ENCODE measurements at regions of chr6 and their contacts with region 1.

Region 1: GRCh38 chr6:104682722-104683643 is 176.7 kb downstream of the HACE1 start:
- DNase-seq: peak; percentile 52 to 83
- ATAC-seq: peak; percentile 57 to 78 (median 60)
- H3K4me3 ChIP-seq: no peak overlapping the region
- H3K4me3 Mint-ChIP-seq: no peak overlapping the region
- H3K27ac ChIP-seq: no peak overlapping the region
- H3K27ac Mint-ChIP-seq: no peak overlapping the region
- H3K4me1 ChIP-seq: peaks cover 4% of the 10 kb centered on the region
- H3K4me1 Mint-ChIP-seq: peaks cover 6 to 12% of the 10 kb centered on the region in 2 donors
- H3K27me3 ChIP-seq: no peaks in the 10 kb centered on the region
- H3K27me3 Mint-ChIP-seq: no peaks in the 10 kb centered on the region
- CTCF ChIP-seq: peak; percentile 87

Region 2: DNA sequence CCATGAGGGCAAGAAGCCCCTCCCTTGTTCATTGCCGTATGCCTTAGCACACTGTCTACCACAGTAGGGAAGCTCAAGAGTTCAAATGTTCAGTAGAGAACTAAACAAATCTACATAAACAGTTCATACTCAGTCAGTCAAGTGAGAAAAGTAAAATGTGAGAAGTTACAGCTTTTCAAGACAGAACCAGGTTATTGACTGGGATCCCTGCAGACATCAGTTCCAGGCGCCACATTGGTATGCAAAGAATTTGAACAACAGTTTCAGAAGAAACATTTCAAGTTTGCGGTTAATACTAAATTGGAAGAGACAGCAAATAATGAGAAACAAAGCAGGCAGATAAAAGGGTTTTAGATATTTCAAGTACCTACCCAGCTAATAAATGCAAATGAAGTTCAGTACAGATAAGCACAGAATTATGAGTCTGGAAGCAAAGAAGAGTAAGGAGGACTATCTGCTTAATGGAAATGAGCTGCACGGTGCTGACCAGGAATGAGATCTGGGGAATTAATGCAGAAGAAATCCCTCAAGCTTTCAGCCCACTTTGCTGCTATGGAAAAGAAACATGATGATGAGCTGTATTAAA is 69.5 kb before region 1 on chr6:
- intact Hi-C with region 1: no loop called
- DNase-seq: no peak
- ATAC-seq: no peak
- H3K4me3 ChIP-seq: no peak overlapping the region
- H3K4me3 Mint-ChIP-seq: no peak overlapping the region
- H3K27ac ChIP-seq: no peak overlapping the region
- H3K27ac Mint-ChIP-seq: no peak overlapping the region
- H3K4me1 ChIP-seq: no peaks in the 10 kb centered on the region
- H3K4me1 Mint-ChIP-seq: no peaks in the 10 kb centered on the region
- H3K27me3 ChIP-seq: no peaks in the 10 kb centered on the region
- H3K27me3 Mint-ChIP-seq: no peaks in the 10 kb centered on the region
- CTCF ChIP-seq: no peak

Region 3: GRCh38 chr6:104771258-104771832 is 88.4 kb after region 1 on chr6:
- intact Hi-C with region 1: loop called (anchors 1 kb)
- DNase-seq: peak in 1 of 2 donors; percentile 46
- ATAC-seq: peak; percentile 66 to 82 (median 72)
- H3K4me3 ChIP-seq: no peak overlapping the region
- H3K4me3 Mint-ChIP-seq: no peak overlapping the region
- H3K27ac ChIP-seq: no peak overlapping the region
- H3K27ac Mint-ChIP-seq: no peak overlapping the region
- H3K4me1 ChIP-seq: no peaks in the 10 kb centered on the region
- H3K4me1 Mint-ChIP-seq: peaks cover 0 to 6% of the 10 kb centered on the region in 2 donors
- H3K27me3 ChIP-seq: no peaks in the 10 kb centered on the region
- H3K27me3 Mint-ChIP-seq: no peaks in the 10 kb centered on the region
- CTCF ChIP-seq: peak; percentile 83

Region 4: GRCh38 chr6:105077596-105078385 is 394.8 kb after region 1 on chr6:
- intact Hi-C with region 1: loop called (anchors 5 kb)
- DNase-seq: peak in 1 of 2 donors; percentile 27
- ATAC-seq: no peak
- H3K4me3 ChIP-seq: no peak overlapping the region
- H3K4me3 Mint-ChIP-seq: no peak overlapping the region
- H3K27ac ChIP-seq: no peak overlapping the region
- H3K27ac Mint-ChIP-seq: no peak overlapping the region
- H3K4me1 ChIP-seq: no peaks in the 10 kb centered on the region
- H3K4me1 Mint-ChIP-seq: no peaks in the 10 kb centered on the region
- H3K27me3 ChIP-seq: peaks cover 2% of the 10 kb centered on the region
- H3K27me3 Mint-ChIP-seq: peaks cover 10 to 24% of the 10 kb centered on the region in 2 donors
- CTCF ChIP-seq: no peak

Measured in natural killer cell (primary cell).